A549 (cell line): ENCODE measurements at regions of chrX and their contacts with region 1.

Region 1: DNA sequence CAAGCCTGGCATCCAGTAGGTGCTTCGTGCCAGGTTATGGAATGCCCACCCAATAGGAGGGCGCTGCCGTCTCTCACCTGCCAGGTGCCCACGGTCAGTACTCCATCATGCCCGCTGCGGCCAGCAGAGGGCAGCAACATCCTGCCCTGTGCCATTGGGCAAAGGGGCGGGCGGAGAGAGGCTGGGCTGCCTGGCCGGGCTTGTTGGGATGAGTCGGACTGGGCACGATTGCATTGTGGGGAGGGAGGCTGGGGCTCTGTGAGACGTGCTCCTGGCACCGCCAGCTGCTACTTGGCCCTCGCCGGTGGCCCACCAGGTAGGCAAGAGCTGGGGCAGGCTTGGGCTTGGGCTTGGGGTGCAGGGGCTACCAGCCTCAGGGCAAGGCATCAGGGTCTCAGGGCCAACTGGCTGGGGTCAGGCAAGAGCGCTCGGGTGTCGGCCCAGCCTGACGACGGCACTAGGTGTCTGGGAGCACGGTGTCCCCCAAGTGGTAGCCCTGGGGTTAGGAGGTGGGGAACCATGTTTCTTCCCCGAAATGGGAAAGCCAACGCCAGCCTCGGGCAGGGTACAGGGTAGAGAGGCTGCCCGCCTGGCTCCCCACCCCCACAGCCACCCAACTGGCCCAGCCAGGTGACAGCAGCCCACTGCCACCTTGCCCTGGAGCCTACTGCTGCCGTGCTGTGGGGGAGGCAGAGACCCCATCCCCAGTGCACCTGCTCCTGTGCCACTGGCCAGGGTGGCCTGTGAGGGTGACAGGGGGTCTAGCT is at the start of gene PLXNB3:
- DNase-seq: peak; percentile 76 to 77
- ATAC-seq: peak; percentile 72 to 91
- H3K4me3 ChIP-seq: 0 out of 3 replicates have a peak within 1 kb of the TSS, but pooled peaks have one; percentile 12
- H3K27ac ChIP-seq: peak within 1 kb of the TSS; percentile 65 to 82; a peak in 5 of 6 replicates
- H3K4me1 ChIP-seq: peaks cover 16% of the 10 kb centered on the region; the same call in 2 of the 3 replicates
- CTCF ChIP-seq: peak; percentile 77
- EP300 ChIP-seq: no peak
- POLR2A ChIP-seq: 0 out of 2 replicates have a peak, but pooled peaks have one; percentile 14
- RAD21 ChIP-seq: peak; percentile 85 to 92
- polyA plus RNA-seq, gene PLXNB3: 1.1 and 1.2 TPM in 2 replicates

Region 2: GRCh38 chrX:153782313-153782712 is 18.1 kb after region 1 on chrX:
- CTCF ChIA-PET with region 1: interaction called, 27 read pairs
- POLR2A ChIA-PET with region 1: interaction called, 3 read pairs
- DNase-seq: no peak
- ATAC-seq: peak in 1 of 2 experiments; percentile 11; a peak in 3 of 6 replicates
- H3K4me3 ChIP-seq: no peak overlapping the region
- H3K27ac ChIP-seq: no peak overlapping the region
- H3K4me1 ChIP-seq: no peaks in the 10 kb centered on the region
- CTCF ChIP-seq: no peak
- EP300 ChIP-seq: no peak
- POLR2A ChIP-seq: no peak
- RAD21 ChIP-seq: no peak

Region 3: GRCh38 chrX:153884136-153885076 is 120.2 kb after region 1 on chrX:
- CTCF ChIA-PET with region 1: interaction called, 15 read pairs
- POLR2A ChIA-PET with region 1: interaction called, 3 read pairs
- DNase-seq: peak in 1 of 2 experiments; percentile 59
- ATAC-seq: peak; percentile 48 to 71; a peak in 4 of 6 replicates
- H3K4me3 ChIP-seq: peak overlapping the region; percentile 52; the same call in 2 of the 3 replicates
- H3K27ac ChIP-seq: peak overlapping the region in 1 of 2 experiments; percentile 81; a peak in 3 of 6 replicates
- H3K4me1 ChIP-seq: peaks cover 21% of the 10 kb centered on the region
- CTCF ChIP-seq: no peak; the same call in 2 of the 3 replicates
- EP300 ChIP-seq: no peak
- POLR2A ChIP-seq: no peak
- RAD21 ChIP-seq: peak; percentile 40 to 56; a peak in 3 of 5 replicates

Region 4: GRCh38 chrX:153953342-153953830 is 189.2 kb after region 1 on chrX:
- CTCF ChIA-PET with region 1: interaction called, 46 read pairs
- POLR2A ChIA-PET with region 1: no interaction called
- DNase-seq: peak; percentile 58 to 68
- ATAC-seq: peak; percentile 38 to 74
- H3K4me3 ChIP-seq: no peak overlapping the region
- H3K27ac ChIP-seq: peak overlapping the region in 1 of 2 experiments; percentile 74; a peak in 2 of 6 replicates
- H3K4me1 ChIP-seq: 0 out of 3 replicates have a peak, but pooled peaks cover 4% of the 10 kb centered on the region
- CTCF ChIP-seq: peak; percentile 70
- EP300 ChIP-seq: no peak
- POLR2A ChIP-seq: no peak
- RAD21 ChIP-seq: peak; percentile 65 to 75

Region 5: GRCh38 chrX:153963546-153963945 is 199.4 kb after region 1 on chrX:
- CTCF ChIA-PET with region 1: interaction called, 11 read pairs
- POLR2A ChIA-PET with region 1: no interaction called
- DNase-seq: no peak
- ATAC-seq: no peak
- H3K4me3 ChIP-seq: no peak overlapping the region
- H3K27ac ChIP-seq: no peak overlapping the region
- H3K4me1 ChIP-seq: peaks cover 8% of the 10 kb centered on the region; the same call in 2 of the 3 replicates
- CTCF ChIP-seq: no peak
- EP300 ChIP-seq: no peak
- POLR2A ChIP-seq: no peak
- RAD21 ChIP-seq: no peak

Region 6: GRCh38 chrX:154714925-154715324 is 950.8 kb after region 1 on chrX:
- CTCF ChIA-PET with region 1: no interaction called
- POLR2A ChIA-PET with region 1: no interaction called
- DNase-seq: peak; percentile 45 to 53
- ATAC-seq: peak; percentile 85 to 94
- H3K4me3 ChIP-seq: no peak overlapping the region
- H3K27ac ChIP-seq: no peak overlapping the region
- H3K4me1 ChIP-seq: 0 out of 3 replicates have a peak, but pooled peaks cover 5% of the 10 kb centered on the region
- CTCF ChIP-seq: peak; percentile 65
- EP300 ChIP-seq: no peak
- POLR2A ChIP-seq: no peak
- RAD21 ChIP-seq: peak; percentile 70 to 76